ENCODE measurements at regions of chr12 and their contacts with region 1.

Region 1: DNA sequence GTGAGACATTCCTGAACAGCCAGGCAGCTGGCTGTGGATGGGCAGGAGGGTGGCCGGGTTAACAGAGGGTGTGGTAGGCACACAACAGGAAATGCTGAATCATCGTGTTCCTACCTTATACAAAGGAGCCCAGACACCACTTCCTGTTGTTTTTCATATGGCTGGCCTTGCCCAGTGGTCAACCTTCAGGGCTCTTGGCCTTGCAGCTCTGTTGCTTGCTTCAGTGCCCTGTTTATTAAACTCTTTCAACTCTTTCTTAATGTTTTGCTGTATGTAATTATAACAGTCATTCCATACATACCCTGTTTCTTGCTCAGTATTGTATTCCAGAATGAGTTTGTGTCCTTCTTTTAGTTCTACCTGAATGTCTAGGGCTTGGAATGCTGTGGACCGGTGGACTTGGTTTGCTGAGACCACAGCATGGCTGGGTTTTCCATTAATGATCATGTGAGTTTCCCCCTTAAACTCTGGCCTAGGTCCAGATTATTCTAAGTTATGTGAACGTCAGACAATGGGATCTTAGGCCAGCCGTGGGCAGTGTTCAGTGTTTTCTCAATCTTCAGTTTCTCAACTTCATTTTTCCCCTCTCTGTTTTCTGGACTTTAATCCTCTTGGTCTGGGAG is 11.9 kb downstream of the CFAP54 start:
- DNase-seq: peak; percentile 23 to 71
- ATAC-seq: peak; percentile 83 to 88 (median 86)
- H3K4me3 ChIP-seq: no peak overlapping the region
- H3K4me3 Mint-ChIP-seq: peak overlapping the region; percentile 77
- H3K27ac ChIP-seq: peak overlapping the region; percentile 72
- H3K27ac Mint-ChIP-seq: peak overlapping the region; percentile 88 to 94
- H3K4me1 ChIP-seq: peaks cover 23% of the 10 kb centered on the region
- H3K4me1 Mint-ChIP-seq: peaks cover 44 to 46% of the 10 kb centered on the region in 2 donors
- H3K27me3 ChIP-seq: no peaks in the 10 kb centered on the region
- H3K27me3 Mint-ChIP-seq: no peaks in the 10 kb centered on the region
- CTCF ChIP-seq: no peak

Region 2: DNA sequence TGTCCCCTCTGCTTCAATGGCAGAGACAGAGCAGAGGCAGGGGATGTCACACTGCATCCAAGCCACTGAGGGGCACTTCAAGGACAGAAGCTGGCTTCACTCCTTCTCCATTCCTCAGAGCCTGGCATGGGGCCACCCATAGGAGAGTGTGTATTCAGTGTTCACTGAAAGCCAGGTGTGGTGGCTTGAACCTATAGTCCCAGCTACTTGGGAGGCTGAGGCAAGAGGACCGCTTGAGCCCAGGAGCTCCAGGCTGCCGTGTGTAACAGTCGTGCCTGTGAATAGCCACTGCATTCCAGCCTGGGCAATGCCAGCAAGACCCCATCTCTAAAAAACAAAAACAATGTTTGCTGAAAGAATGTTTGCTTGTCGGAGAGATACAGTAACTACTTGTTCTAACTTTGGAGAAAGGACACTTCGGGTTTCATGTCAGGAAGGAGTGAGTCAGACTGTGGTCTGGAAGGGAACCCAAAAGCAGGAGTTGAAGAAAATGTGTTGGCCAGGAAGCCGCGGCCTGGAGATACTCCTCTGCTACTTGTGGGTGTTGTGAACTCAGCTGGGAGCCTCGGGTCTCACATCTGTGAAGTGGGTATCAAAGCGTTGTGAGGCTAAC is 263.7 kb before region 1 on chr12:
- intact Hi-C with region 1: loop called (anchors 5 kb)
- DNase-seq: peak; percentile 60 to 79
- ATAC-seq: peak; percentile 34 to 54 (median 36)
- H3K4me3 ChIP-seq: no peak overlapping the region
- H3K4me3 Mint-ChIP-seq: peak overlapping the region; percentile 77
- H3K27ac ChIP-seq: peak overlapping the region; percentile 56
- H3K27ac Mint-ChIP-seq: peak overlapping the region; percentile 87 to 95
- H3K4me1 ChIP-seq: peaks cover 75% of the 10 kb centered on the region
- H3K4me1 Mint-ChIP-seq: peaks cover 75 to 82% of the 10 kb centered on the region in 2 donors
- H3K27me3 ChIP-seq: no peaks in the 10 kb centered on the region
- H3K27me3 Mint-ChIP-seq: no peaks in the 10 kb centered on the region
- CTCF ChIP-seq: no peak

Measured in natural killer cell (primary cell).